Activated CD8-positive, alpha-beta T cell treated with anti-CD3 and anti-CD28 coated beads for 36 hours (primary cell): ENCODE measurements at regions of chr19 and their contacts with region 1.

Region 1: DNA sequence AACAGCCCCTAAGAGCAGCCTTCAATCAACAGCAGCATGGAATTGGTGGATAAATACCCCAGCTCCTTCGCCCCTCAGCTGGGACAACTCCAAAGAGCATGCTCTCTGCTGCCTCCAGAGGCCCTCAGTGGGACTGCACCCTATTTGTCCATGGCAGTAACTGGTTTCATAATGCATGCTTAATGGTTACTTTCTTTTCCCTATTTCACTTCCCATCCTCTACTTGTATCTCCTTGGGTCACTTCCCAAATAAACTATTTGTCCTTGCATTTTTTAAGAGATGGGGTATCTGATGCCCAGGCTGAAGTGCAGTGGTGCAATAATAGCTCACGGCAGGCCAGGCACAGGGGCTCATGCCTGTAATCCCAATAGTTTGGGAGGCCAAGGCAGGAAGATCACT is 13.5 kb upstream of the TPM4 start:
- DNase-seq: peak; percentile 76
- ATAC-seq: peak; percentile 57
- H3K4me3 Mint-ChIP-seq: no peak overlapping the region
- H3K27ac Mint-ChIP-seq: no peak overlapping the region
- H3K4me1 Mint-ChIP-seq: peaks cover 26% of the 10 kb centered on the region
- H3K27me3 Mint-ChIP-seq: no peaks in the 10 kb centered on the region
- CTCF ChIP-seq: peak; percentile 96

Region 2: GRCh38 chr19:15758379-15758778 is 304.4 kb before region 1 on chr19:
- CTCF ChIA-PET with region 1: no interaction called
- POLR2A ChIA-PET with region 1: no interaction called
- intact Hi-C with region 1: no loop called
- DNase-seq: no peak
- ATAC-seq: no peak
- H3K4me3 Mint-ChIP-seq: no peak overlapping the region
- H3K27ac Mint-ChIP-seq: no peak overlapping the region
- H3K4me1 Mint-ChIP-seq: no peaks in the 10 kb centered on the region
- H3K27me3 Mint-ChIP-seq: peaks cover 55% of the 10 kb centered on the region
- CTCF ChIP-seq: no peak

Region 3: DNA sequence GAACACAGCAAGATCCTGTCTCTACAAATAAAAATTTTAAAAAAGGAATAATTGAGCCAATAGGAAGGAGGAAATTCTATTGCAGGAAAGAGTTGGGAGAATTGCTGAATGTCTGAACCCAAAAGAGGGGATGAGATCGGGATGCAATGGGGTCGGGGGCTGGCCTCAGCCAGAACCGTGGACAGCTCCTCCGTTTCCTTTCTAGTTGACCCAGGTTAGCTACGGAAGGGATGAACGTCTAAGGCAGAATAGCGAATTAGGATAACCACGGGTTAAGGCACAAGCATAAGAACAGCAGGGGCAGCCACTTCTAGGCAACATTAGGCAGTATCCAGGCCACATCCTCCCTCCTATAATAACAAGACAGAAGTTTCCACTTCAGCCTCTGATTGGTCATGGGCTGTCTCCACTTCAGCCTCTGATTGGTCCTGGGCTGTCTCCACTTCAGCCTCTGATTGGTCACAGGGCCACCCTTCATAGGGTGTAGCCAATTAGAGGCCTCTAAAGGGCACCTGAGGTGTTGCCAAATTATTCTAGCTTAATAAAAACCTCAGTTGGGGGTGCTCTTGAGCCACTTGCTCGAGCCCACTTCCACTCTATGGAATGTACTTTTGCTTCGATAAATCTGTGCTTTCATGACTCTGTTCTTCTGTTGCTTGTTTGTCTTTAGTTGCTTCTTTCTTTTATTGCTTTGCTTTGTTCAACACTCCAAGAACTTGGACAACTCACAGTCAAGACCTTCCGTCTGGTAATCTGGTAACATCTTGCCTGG is 11.3 kb before region 1 on chr19:
- CTCF ChIA-PET with region 1: interaction called, 28 read pairs
- POLR2A ChIA-PET with region 1: no interaction called
- intact Hi-C with region 1: no loop called
- DNase-seq: peak; percentile 72
- ATAC-seq: peak; percentile 100
- H3K4me3 Mint-ChIP-seq: no peak overlapping the region
- H3K27ac Mint-ChIP-seq: no peak overlapping the region
- H3K4me1 Mint-ChIP-seq: peaks cover 6% of the 10 kb centered on the region
- H3K27me3 Mint-ChIP-seq: no peaks in the 10 kb centered on the region
- CTCF ChIP-seq: peak; percentile 10

Region 4: DNA sequence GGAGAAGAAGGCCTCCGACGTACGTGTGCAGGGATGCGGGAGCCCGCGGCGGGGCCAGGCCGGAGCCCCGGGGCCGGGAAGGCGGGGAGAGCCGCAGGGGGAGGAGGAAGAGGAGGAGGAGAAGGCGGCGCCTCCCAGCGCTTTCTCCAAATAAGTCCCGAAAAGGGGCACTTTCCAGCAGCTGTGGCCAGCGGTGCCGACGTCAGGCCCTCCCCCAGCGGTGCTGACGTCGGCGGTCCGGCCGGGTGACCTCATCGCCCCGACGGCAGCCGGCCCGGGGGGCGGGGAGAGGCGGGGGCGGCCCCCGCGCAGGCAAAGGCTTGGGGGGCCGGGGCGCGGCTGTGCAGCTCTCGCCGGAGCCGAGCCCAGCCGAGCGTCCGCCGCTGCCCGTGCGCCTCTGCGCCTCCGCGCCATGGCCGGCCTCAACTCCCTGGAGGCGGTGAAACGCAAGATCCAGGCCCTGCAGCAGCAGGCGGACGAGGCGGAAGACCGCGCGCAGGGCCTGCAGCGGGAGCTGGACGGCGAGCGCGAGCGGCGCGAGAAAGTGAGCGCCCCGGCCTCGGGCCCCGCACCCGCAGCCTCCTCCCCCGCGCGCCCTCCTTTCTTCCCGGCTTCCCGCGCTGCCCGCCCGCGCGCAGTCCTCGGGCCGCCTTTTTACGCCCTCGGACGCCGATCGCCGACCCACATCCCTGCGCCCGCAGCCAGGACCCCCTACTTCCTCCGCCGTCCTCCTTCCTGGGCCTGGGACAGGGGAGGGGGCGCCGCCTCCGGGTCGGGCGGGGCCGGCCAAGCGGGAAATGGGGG is 13.6 kb after region 1 on chr19 and contains the start of gene TPM4:
- CTCF ChIA-PET with region 1: interaction called, 90 read pairs
- POLR2A ChIA-PET with region 1: interaction called, 22 read pairs
- intact Hi-C with region 1: no loop called
- DNase-seq: peak; percentile 93
- ATAC-seq: peak; percentile 53
- H3K4me3 Mint-ChIP-seq: peak within 1 kb of the TSS; percentile 78
- H3K27ac Mint-ChIP-seq: peak within 1 kb of the TSS; percentile 100
- H3K4me1 Mint-ChIP-seq: peaks cover 59% of the 10 kb centered on the region
- H3K27me3 Mint-ChIP-seq: no peaks in the 10 kb centered on the region
- CTCF ChIP-seq: no peak
- total RNA-seq, gene TPM4: 230 to 232 TPM

Region 5: GRCh38 chr19:16088351-16089009 is 25.7 kb after region 1 on chr19:
- CTCF ChIA-PET with region 1: interaction called, 20 read pairs
- POLR2A ChIA-PET with region 1: interaction called, 4 read pairs
- intact Hi-C with region 1: no loop called
- DNase-seq: no peak
- ATAC-seq: no peak
- H3K4me3 Mint-ChIP-seq: no peak overlapping the region
- H3K27ac Mint-ChIP-seq: no peak overlapping the region
- H3K4me1 Mint-ChIP-seq: peaks cover 32% of the 10 kb centered on the region
- H3K27me3 Mint-ChIP-seq: no peaks in the 10 kb centered on the region
- CTCF ChIP-seq: no peak

Region 6: GRCh38 chr19:16095071-16095571 is 32.3 kb after region 1 on chr19:
- CTCF ChIA-PET with region 1: interaction called, 19 read pairs
- POLR2A ChIA-PET with region 1: interaction called, 4 read pairs
- intact Hi-C with region 1: no loop called
- DNase-seq: peak; percentile 77
- ATAC-seq: peak; percentile 85
- H3K4me3 Mint-ChIP-seq: peak overlapping the region; percentile 44
- H3K27ac Mint-ChIP-seq: peak overlapping the region; percentile 95
- H3K4me1 Mint-ChIP-seq: peaks cover 29% of the 10 kb centered on the region
- H3K27me3 Mint-ChIP-seq: no peaks in the 10 kb centered on the region
- CTCF ChIP-seq: no peak

Region 7: DNA sequence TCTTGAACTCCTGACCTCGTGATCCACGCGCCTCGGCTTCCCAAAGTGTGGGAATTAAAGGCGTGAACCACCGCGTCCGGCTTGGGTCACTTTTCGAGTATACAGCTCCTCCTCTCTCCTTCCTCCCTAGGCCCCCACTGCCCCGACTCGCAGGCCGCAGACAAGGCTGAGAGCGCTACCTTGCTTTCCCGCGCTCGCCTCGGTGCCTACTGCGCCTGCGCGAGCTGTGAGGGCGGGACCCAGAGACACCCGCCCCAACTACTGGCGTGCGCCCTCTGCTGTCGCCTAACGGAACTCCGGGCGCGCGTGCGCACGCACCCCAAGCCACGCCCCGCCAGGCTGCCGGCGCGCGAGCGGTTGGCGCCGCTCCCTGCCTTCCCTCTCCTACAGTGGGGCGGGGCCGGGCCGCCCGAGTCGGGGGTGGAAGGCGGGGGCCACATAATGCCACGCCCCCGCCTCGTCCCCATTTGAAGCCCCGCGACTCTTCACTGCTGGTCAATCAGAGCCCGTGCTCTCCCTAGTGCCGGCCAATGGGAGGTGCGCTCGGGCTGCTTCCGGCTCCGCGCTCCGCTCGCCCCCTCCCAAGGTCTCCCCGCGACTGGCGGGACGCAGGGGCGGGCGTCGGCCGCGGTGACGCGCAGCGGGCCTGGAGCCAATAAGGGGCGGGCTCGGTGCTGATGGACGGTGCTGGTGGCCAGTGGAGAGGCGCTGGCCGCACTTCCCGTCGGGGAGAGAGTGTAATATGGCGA is 48.5 kb after region 1 on chr19 and contains the start of gene RAB8A:
- CTCF ChIA-PET with region 1: interaction called, 15 read pairs
- POLR2A ChIA-PET with region 1: interaction called, 3 read pairs
- intact Hi-C with region 1: no loop called
- DNase-seq: peak; percentile 99
- ATAC-seq: peak; percentile 93
- H3K4me3 Mint-ChIP-seq: peak within 1 kb of the TSS; percentile 95
- H3K27ac Mint-ChIP-seq: peak within 1 kb of the TSS; percentile 98
- H3K4me1 Mint-ChIP-seq: peaks cover 35% of the 10 kb centered on the region
- H3K27me3 Mint-ChIP-seq: no peaks in the 10 kb centered on the region
- CTCF ChIP-seq: peak; percentile 92
- total RNA-seq, gene RAB8A: 123 to 128 TPM

Region 8: DNA sequence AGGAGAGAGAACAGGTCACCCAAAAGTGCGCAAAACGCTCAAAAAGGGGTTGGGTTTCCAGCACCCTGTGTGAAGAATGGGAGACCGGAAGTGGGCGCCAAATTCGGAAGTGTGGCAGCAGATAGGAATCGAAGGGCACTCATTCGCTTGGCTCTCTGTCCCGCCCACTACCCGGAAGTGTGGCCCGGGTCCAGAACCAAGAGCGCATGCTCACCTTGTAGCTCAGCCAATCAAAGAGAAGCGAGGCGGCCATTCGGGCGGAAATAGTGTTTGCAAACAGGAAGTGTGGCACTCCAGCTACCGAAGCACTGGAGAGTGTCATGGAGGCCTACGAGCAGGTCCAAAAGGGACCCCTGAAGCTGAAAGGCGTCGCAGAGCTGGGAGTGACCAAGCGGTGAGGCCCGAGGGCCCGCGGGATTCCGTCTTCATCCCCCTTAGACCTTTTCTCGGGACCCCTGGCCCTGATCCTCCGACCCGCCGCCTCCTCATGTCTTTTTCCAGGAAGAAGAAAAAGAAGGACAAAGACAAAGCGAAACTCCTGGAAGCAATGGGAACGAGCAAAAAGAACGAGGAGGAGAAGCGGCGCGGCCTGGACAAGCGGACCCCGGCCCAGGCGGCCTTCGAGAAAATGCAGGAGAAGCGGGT is 122.5 kb after region 1 on chr19 and contains the start of gene FAM32A:
- CTCF ChIA-PET with region 1: interaction called, 48 read pairs
- POLR2A ChIA-PET with region 1: interaction called, 4 read pairs
- intact Hi-C with region 1: no loop called
- DNase-seq: peak; percentile 100
- ATAC-seq: peak; percentile 97
- H3K4me3 Mint-ChIP-seq: peak within 1 kb of the TSS; percentile 100
- H3K27ac Mint-ChIP-seq: peak within 1 kb of the TSS; percentile 95
- H3K4me1 Mint-ChIP-seq: peaks cover 22% of the 10 kb centered on the region
- H3K27me3 Mint-ChIP-seq: no peaks in the 10 kb centered on the region
- CTCF ChIP-seq: no peak
- total RNA-seq, gene FAM32A: 41.7 to 44.7 TPM